Mammary epithelial cell (primary cell): ENCODE measurements at regions of chr19 and their contacts with region 1.

Region 1: GRCh38 chr19:51064534-51065220 is at the start of gene KLK13:
- DNase-seq: peak; percentile 12
- H3K4me3 ChIP-seq: peak within 1 kb of the TSS in 2 of 3 experiments; percentile 27 to 31
- H3K27ac ChIP-seq: no peak within 1 kb of the TSS
- H3K4me1 ChIP-seq: peaks cover 9% of the 10 kb centered on the region
- H3K27me3 ChIP-seq: no peaks in the 10 kb centered on the region
- CTCF ChIP-seq: no peak
- total RNA-seq, gene KLK13: 0.28 to 0.83 TPM

Region 2: DNA sequence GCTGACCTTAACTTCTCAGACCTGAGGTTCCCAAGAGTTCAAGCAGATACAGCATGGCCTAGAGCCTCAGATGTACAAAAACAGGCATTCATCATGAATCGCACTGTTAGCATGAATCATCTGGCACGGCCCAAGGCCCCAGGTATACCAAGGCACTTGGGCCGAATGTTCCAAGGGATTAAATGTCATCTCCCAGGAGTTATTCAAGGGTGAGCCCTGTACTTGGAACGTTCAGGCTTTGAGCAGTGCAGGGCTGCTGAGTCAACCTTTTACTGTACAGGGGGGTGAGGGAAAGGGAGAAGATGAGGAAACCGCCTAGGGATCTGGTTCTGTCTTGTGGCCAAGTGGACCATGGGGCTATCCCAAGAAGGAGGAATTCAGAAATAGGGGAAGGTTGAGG is 203.7 kb before region 1 on chr19:
- CTCF ChIA-PET with region 1: no interaction called
- dilution Hi-C with region 1: loop called (anchors 10 kb)
- in situ Hi-C with region 1: no loop called
- intact Hi-C with region 1: no loop called
- DNase-seq: peak; percentile 40
- H3K4me3 ChIP-seq: no peak overlapping the region
- H3K27ac ChIP-seq: no peak overlapping the region
- H3K4me1 ChIP-seq: no peaks in the 10 kb centered on the region
- H3K27me3 ChIP-seq: peaks cover 9% of the 10 kb centered on the region
- CTCF ChIP-seq: no peak